Breast epithelium (tissue), 4 donors: ENCODE measurements at regions of chr7 and their contacts with region 1.

Region 1: DNA sequence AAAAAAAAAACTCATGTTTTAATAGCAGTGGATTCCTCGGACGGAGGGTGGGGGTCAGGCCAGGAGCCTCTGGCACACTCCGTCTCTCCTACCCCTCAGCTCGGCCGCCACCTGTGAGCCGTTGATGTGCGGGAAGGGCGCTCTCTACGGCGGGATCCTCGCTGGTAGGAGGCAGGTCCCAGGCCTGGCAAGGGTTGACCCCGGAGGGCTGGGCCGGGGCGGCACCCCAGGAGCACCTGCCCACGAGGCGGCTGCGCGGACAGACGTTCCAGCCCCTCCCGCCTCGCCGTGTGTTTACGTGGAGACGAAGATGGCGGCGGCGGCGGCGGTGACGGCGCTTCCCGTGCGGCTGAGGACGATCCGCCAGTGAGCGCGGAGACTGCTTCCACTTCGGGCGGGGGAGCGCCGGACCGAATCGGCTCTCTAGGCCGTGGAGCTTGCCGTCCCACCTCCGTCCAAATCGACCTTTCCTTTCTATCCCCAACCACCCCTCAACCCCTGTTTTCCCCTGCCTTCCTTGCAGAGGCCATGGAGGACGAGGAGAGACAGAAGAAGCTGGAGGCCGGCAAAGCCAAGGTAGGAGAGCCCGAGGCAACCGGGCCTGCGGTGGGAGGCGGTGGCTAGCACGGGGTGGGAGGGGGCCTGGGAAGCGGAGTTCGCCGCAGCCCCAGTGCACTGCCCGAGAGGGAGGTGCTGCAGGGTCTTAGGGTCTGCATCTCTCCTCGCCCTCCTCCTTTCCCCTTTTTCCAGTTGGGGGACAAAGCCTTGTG is at the start of gene AKAP9:
- DNase-seq: peak; percentile 90 to 91
- H3K4me3 ChIP-seq: peak within 1 kb of the TSS; percentile 80 to 89 (median 82)
- H3K27ac ChIP-seq: peak within 1 kb of the TSS; percentile 97 to 98
- H3K4me1 ChIP-seq: peaks cover 4 to 8% of the 10 kb centered on the region in 2 donors
- H3K27me3 ChIP-seq: no peaks in the 10 kb centered on the region
- CTCF ChIP-seq: peak in 1 of 3 donors; percentile 9
- POLR2A ChIP-seq: peak; percentile 71
- total RNA-seq, gene AKAP9: 73.3 to 193 (median 124) TPM

Region 2: DNA sequence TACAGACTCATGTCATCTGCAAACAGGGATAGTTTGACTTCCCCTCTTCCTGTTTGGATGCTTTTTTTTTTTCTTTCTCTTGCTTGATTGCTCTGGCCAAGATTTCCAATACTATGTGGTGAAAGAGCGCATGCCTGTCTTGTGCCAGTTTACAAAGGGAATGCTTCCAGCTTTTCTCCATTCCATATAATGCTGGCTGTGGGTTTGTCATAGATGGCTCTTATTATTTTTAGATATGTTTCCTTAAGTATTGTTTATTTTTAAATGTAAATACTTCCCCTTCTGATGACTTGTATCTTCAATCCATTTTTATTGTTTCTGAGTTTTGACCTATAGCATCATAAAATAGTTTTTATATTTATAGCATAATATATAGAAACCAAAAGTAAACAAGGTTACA is 1637.5 kb before region 1 on chr7:
- intact Hi-C with region 1: no loop called
- DNase-seq: no peak
- H3K4me3 ChIP-seq: no peak overlapping the region
- H3K27ac ChIP-seq: no peak overlapping the region
- H3K4me1 ChIP-seq: no peaks in the 10 kb centered on the region
- H3K27me3 ChIP-seq: no peaks in the 10 kb centered on the region
- CTCF ChIP-seq: no peak
- POLR2A ChIP-seq: no peak

Region 3: DNA sequence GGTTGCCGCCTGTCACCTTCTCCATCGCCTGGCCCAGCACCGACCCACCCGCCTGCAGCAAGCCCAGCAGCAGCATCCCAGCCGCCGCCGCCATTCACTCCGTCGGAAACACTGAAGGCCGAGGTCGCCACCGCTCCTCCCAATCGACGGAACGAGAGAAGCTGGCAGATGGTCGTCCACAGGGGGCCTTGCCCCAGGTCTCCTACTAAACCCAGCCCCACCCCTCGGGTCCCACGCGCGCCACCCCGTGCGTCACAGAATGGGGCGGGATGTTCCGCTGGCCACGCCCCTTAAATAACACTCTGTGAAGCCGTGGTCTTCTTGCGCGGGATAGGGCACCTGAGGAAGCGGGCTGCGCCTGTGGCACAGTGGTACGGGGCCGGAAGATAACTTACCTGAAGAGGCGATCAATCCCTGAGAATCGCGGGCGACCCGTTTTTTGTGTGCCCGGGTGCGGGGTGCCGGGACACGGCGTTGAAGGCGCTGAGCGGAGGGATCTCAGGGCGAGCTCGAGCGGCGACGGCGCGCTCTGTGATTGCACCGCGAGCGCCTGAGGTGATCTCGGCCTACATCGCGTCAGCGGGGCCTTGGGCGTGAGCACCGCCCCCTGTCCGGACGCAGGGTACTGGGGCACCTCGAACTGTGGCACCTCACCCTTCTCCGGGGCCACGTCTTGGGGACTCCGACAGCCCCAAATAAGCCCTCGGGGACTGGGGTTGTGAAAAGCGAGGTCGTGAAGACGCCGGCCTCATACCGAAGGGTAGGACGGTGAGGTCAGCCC is 193.7 kb after region 1 on chr7 and contains the start of gene CYP51A1:
- intact Hi-C with region 1: loop called (anchors 10 kb)
- DNase-seq: peak; percentile 91 to 92
- H3K4me3 ChIP-seq: peak within 1 kb of the TSS; percentile 84 to 95 (median 84)
- H3K27ac ChIP-seq: peak within 1 kb of the TSS; percentile 97 to 98
- H3K4me1 ChIP-seq: no peaks in the 10 kb centered on the region
- H3K27me3 ChIP-seq: no peaks in the 10 kb centered on the region
- CTCF ChIP-seq: no peak
- POLR2A ChIP-seq: peak; percentile 77
- total RNA-seq, gene CYP51A1: 28.3 to 39.1 (median 32.4) TPM